Activated B cell treated with CpG ODN at 0.5 μM for 24 hours (primary cell): ENCODE measurements at regions of chr13 and their contacts with region 1.

Region 1: DNA sequence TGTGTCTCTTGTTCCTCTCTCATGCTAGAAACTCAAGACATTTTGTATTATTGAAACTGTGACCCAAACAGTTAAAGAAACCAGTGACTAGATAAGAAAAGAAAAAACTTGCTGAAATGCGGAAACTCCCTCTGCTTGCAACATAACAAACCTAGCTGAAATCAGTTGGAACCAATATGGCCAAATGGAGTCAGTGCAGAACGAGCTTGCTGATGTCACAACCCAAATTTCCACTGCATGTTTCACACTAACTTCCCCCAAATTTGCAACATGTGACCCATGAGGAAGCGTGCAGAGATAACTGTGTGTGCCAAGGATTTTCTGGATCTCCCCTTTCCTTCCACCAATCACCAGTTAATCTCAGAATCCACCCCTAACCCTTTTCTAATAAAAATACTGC is 208.0 kb downstream of the DLEU7 start:
- DNase-seq: no peak
- ATAC-seq: peak; percentile 75
- H3K4me3 Mint-ChIP-seq: peak overlapping the region; percentile 61
- H3K27ac Mint-ChIP-seq: peak overlapping the region; percentile 96
- H3K4me1 Mint-ChIP-seq: peaks cover 42% of the 10 kb centered on the region
- H3K27me3 Mint-ChIP-seq: no peaks in the 10 kb centered on the region
- CTCF ChIP-seq: no peak

Region 2: DNA sequence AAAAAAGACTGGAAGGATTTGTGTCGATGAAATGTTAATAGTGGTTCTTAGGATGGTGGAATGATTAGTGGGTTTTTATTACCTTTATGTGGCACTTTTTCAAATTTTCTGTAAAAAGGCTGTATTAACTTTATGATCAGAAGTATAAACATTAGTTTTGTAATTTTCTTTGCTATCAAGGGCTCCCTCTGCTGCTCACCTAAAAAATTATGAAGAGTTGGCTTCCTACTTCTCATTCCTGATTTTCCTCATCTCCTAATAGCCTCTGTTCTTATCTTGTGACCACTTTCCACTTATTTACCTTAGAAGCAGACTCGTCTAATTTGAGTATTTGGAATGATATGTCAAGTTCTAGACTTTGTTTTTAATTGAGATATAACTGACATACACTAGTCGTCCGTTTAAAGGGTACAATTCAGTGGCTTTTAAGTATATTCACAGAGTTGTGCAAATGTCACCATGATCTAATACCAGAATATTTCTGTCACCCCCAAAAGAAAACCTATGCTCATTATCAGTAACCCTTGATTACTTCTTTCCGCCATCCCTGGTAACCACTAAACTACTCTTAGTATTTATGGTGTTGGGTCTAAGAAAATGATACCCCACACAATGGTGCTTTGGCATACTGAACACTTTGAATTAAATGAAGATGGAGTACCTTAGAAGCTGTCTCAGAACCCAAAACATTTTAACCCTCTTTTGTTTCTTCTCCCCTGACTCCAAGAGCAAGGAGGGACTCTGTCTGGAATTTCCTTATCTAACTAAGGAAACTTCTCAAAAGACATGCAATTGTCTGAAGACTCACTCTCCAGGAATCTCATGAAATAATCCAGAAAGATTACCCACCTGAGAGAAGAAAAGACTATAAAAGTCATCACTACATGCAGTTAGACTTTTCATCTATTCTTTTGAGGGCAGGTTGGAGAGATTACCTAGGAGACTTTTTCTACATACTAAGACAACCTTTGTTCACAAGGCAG is 103.3 kb before region 1 on chr13:
- CTCF ChIA-PET with region 1: no interaction called
- POLR2A ChIA-PET with region 1: interaction called, 3 read pairs
- intact Hi-C with region 1: loop called (anchors 5 kb)
- DNase-seq: no peak
- ATAC-seq: no peak
- H3K4me3 Mint-ChIP-seq: no peak overlapping the region
- H3K27ac Mint-ChIP-seq: no peak overlapping the region
- H3K4me1 Mint-ChIP-seq: peaks cover 15% of the 10 kb centered on the region
- H3K27me3 Mint-ChIP-seq: no peaks in the 10 kb centered on the region
- CTCF ChIP-seq: no peak

Region 3: GRCh38 chr13:50613356-50613831 is 22.1 kb before region 1 on chr13:
- CTCF ChIA-PET with region 1: no interaction called
- POLR2A ChIA-PET with region 1: no interaction called
- intact Hi-C with region 1: loop called (anchors 2 kb)
- DNase-seq: no peak
- ATAC-seq: no peak
- H3K4me3 Mint-ChIP-seq: no peak overlapping the region
- H3K27ac Mint-ChIP-seq: no peak overlapping the region
- H3K4me1 Mint-ChIP-seq: peaks cover 45% of the 10 kb centered on the region
- H3K27me3 Mint-ChIP-seq: no peaks in the 10 kb centered on the region
- CTCF ChIP-seq: no peak

Region 4: GRCh38 chr13:50760751-50761150 is 125.2 kb after region 1 on chr13:
- CTCF ChIA-PET with region 1: no interaction called
- POLR2A ChIA-PET with region 1: interaction called, 4 read pairs
- intact Hi-C with region 1: loop called (anchors 5 kb)
- DNase-seq: no peak
- ATAC-seq: no peak
- H3K4me3 Mint-ChIP-seq: no peak overlapping the region
- H3K27ac Mint-ChIP-seq: no peak overlapping the region
- H3K4me1 Mint-ChIP-seq: peaks cover 53% of the 10 kb centered on the region
- H3K27me3 Mint-ChIP-seq: no peaks in the 10 kb centered on the region
- CTCF ChIP-seq: no peak

Region 5: GRCh38 chr13:52179925-52180324 is 1544.4 kb after region 1 on chr13:
- CTCF ChIA-PET with region 1: no interaction called
- POLR2A ChIA-PET with region 1: no interaction called
- intact Hi-C with region 1: no loop called
- DNase-seq: no peak
- ATAC-seq: no peak
- H3K4me3 Mint-ChIP-seq: no peak overlapping the region
- H3K27ac Mint-ChIP-seq: no peak overlapping the region
- H3K4me1 Mint-ChIP-seq: no peaks in the 10 kb centered on the region
- H3K27me3 Mint-ChIP-seq: no peaks in the 10 kb centered on the region
- CTCF ChIP-seq: no peak